AG04449 (cell line): ENCODE measurements at regions of chr2 and their contacts with region 1.

Region 1: DNA sequence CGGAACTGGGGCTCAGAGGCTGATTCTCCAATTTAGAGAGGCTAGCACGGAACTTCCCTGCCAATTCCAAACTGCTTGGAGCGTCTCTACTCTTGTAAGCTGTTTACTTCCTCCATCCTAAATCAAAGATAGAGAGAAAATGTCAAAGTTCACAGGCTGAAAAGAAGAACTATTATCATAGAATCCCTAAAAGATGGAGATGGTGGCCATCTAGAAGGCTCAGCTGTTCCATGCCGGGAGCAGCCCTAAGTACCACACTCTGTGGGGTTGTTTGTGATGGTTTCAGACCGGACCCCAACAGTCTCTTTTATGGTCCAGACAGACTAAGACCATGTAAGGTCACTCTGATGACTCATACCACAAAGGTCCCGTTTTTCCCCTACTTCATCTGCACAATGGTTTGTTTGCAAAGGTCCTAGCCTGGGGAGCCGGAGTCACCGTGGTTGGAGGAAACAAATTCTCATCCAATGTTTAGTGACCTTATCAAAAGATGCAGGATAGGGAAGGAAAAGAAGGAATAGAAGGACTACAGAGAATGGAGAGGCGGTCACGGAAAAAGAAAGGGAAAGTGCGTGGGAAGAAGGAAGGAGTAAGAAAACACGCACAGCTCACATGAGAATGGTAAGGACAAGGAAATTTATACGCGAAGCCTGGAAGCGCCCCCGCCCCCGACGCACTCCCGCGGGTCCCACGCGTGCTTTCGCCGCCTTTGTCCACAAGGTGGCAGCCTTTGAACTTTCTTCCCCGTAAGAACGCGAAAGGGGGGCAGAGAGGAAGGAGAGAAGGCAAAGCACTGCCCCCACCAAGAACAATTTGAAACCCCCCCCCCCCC is 453 bp upstream of the ANTXR1 start:
- DNase-seq: no peak
- H3K4me3 ChIP-seq: peak overlapping the region; percentile 98
- CTCF ChIP-seq: peak; percentile 78

Region 2: DNA sequence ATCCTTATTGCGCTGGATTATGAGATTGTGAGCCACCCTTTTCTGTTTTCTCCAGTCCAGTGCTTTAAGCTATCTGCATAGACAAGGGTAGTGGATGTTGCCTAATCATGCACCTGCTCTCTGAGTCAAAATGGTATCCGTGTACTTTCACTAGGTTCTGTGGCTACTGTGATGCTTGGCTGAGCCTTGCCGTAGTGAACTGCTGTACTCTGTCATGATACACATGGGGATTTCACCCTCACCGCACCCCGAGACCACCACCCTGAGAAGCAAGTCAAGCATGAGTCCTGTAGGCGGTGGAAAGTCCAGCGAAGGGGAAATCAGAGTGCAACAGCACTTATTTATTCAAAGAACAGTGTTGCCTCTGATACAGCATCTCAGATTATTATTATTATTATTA is 222.9 kb before region 1 on chr2:
- CTCF ChIA-PET with region 1: no interaction called
- POLR2A ChIA-PET with region 1: no interaction called
- DNase-seq: no peak
- H3K4me3 ChIP-seq: no peak overlapping the region
- CTCF ChIP-seq: no peak

Region 3: GRCh38 chr2:68994864-68995263 is 17.7 kb before region 1 on chr2:
- CTCF ChIA-PET with region 1: interaction called, 15 read pairs
- POLR2A ChIA-PET with region 1: no interaction called
- DNase-seq: no peak
- H3K4me3 ChIP-seq: no peak overlapping the region
- CTCF ChIP-seq: no peak

Region 4: GRCh38 chr2:69026026-69026425 is 13.5 kb after region 1 on chr2:
- CTCF ChIA-PET with region 1: interaction called, 10 read pairs
- POLR2A ChIA-PET with region 1: no interaction called
- DNase-seq: no peak
- H3K4me3 ChIP-seq: no peak overlapping the region
- CTCF ChIP-seq: peak; percentile 17

Region 5: DNA sequence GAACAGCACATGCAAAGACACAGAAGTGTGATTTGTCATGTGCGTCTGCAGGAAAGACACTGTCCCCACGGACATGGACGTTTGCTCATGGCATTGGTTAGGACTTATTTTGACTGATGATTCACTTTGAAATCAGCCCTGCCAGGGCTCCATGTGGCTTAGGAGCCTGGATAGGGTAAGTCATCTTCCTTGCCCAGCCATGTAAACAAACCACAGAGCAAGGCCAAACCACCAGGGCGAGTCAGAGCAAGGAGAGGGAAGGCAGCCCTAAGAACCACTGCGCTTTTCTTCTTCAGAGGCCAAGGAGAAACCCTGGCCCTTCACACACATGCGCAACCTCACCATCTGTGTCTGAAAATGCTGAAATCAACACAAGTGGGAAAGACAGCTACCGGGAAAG is 285.7 kb after region 1 on chr2:
- CTCF ChIA-PET with region 1: interaction called, 81 read pairs
- POLR2A ChIA-PET with region 1: no interaction called
- DNase-seq: peak; percentile 83
- H3K4me3 ChIP-seq: no peak overlapping the region
- CTCF ChIP-seq: no peak

Region 6: GRCh38 chr2:69306822-69307578 is 294.5 kb after region 1 on chr2:
- CTCF ChIA-PET with region 1: interaction called, 81 read pairs
- POLR2A ChIA-PET with region 1: interaction called, 3 read pairs
- DNase-seq: no peak
- H3K4me3 ChIP-seq: peak overlapping the region; percentile 58
- CTCF ChIP-seq: peak; percentile 97